G401 (cell line): ENCODE measurements at regions of chr3 and their contacts with region 1.

Region 1: DNA sequence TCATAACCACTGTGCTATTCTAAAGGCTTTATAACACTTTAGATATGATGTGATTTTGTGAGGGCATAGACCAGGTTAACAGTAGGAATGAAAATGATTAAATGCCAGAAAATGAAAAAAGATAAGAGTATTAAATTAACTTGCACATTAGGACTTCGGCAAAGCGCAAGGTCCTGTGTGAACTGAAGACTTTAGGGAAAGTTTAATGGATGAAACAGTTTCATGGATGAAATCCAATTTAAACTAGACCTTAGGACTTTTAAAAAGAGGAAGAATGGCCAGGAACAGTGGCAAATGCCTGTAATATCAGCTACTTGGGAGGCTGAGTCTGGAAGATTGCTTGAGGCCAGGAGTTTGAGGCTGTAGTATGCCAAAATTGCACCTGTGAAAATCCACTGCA is 8.7 kb downstream of the SLMAP start:
- DNase-seq: no peak

Region 2: GRCh38 chr3:57826245-57826951 is 61.6 kb after region 1 on chr3:
- in situ Hi-C with region 1: loop called (anchors 10 kb)
- DNase-seq: no peak